Spleen (tissue), 13 donors: ENCODE measurements at regions of chr5 and their contacts with region 1.

Region 1: GRCh38 chr5:169670769-169671525 is 33.9 kb downstream of the DOCK2 start:
- DNase-seq: no peak
- H3K4me3 ChIP-seq: no peak overlapping the region
- H3K27ac ChIP-seq: peak overlapping the region in 3 of 8 donors; percentile 1 to 63 (median 46)
- H3K4me1 ChIP-seq: peaks cover 0 to 20% (median 2%) of the 10 kb centered on the region in 6 donors
- H3K27me3 ChIP-seq: no peaks in the 10 kb centered on the region
- CTCF ChIP-seq: no peak
- POLR2A ChIP-seq: no peak

Region 2: DNA sequence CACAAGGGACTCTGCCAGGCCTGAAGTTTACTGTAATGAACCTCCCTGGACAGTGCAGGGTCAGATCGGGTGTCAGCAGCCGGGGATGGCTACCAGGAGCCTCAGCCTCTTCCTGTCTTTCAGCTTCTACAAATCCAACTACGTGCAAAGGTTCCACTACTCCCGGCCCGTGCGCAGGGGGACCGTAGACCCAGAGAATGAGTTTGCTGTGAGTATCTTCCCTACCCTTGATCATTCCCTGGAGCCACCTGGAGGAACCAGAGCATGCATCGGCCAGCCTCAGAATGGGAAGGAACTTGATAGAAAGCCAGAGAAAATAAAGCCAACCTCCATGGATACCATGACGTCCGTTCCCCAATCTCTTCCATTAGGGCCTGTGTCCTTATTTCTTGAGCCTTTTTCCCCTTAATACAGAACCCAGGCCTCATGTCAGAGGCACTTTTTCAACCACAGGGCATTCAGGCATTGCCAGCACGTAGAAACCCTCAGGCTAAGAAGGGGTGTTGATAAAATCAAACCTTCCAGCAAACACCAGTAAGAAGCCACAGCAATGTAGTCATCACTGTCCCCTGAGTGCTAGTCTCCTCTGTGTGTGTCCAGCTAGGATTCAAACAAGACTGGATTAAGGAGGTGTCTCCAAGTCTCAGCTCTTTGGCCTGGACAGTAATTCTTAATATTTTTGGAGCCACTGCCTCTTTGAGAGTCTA is 385.8 kb after region 1 on chr5:
- intact Hi-C with region 1: loop called (anchors 5 kb)
- DNase-seq: no peak
- H3K4me3 ChIP-seq: no peak overlapping the region
- H3K27ac ChIP-seq: no peak overlapping the region
- H3K4me1 ChIP-seq: no peaks in the 10 kb centered on the region
- H3K27me3 ChIP-seq: no peaks in the 10 kb centered on the region
- CTCF ChIP-seq: no peak
- POLR2A ChIP-seq: no peak